Caco-2 (cell line): ENCODE measurements at regions of chr19 and their contacts with region 1.

Region 1: DNA sequence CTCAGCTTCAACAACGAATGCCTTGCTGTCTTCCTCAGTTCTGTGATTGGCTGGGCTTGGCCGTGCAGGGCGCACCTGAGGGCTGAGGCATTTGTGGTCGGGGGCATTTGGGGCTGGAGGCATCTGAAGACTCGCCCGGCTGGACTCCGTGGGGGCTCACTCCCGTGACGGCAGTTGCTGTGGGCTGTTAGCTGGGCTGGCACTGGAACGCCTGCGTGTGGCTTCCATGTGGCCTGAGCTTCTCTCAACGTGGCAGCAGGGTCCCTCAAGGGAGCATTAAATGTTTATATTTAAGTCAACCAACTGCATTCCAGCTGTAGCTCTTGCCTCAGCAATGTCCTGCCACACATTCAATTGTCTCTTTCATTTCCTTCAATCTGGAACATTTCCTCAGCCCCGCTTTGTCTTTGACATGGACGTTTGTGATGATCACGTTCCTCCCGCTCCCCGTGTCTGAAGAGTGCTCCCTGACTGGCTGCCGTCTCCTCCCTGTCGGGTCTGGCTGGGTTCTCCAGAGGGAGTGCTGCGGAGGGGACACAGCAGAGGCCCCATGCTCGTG is 21.0 kb downstream of the CCDC8 start:
- DNase-seq: no peak
- H3K4me3 ChIP-seq: no peak overlapping the region
- H3K4me3 Mint-ChIP-seq: no peak overlapping the region
- H3K27ac Mint-ChIP-seq: no peak overlapping the region
- H3K4me1 ChIP-seq: no peaks in the 10 kb centered on the region
- H3K4me1 Mint-ChIP-seq: no peaks in the 10 kb centered on the region
- H3K27me3 ChIP-seq: no peaks in the 10 kb centered on the region
- H3K27me3 Mint-ChIP-seq: no peaks in the 10 kb centered on the region
- CTCF ChIP-seq: no peak

Region 2: DNA sequence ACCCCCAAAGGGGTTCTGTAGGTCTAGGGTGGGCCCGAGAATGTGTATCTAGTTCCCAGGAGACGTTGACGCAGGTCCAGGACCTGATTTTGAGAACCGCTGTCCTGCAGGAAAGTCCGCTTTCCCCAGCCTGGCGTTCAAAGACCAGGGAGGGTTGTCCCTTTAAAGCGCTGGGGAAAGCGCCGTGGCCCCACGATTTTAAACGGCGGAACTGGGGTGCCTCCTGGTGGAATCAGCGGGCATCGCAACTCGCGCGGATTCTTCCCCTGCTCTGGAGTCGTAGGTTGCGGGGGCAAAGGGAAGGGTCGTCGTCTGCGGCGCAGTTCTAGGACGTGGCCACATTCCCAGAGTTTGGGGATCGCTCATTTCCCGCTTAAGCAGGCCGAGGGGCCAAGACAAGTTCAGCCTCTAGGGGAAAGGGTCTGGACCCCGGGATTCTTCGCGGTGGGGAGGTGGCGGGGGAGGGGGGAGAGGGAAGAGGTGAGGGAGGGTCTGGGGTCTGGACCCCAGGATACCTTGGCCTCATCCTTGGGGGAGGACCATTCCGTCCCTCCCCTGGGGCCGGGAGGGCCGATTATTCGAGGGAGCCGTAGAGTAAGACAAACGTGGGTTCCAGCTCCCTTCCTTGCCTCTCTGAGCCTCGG is 95.6 kb after region 1 on chr19:
- CTCF ChIA-PET with region 1: interaction called, 5 read pairs
- POLR2A ChIA-PET with region 1: no interaction called
- intact Hi-C with region 1: loop called (anchors 1 kb)
- DNase-seq: peak; percentile 71 to 86
- H3K4me3 ChIP-seq: peak overlapping the region; percentile 22
- H3K4me3 Mint-ChIP-seq: peak overlapping the region; percentile 43
- H3K27ac Mint-ChIP-seq: no peak overlapping the region
- H3K4me1 ChIP-seq: no peaks in the 10 kb centered on the region
- H3K4me1 Mint-ChIP-seq: no peaks in the 10 kb centered on the region
- H3K27me3 ChIP-seq: peaks cover 1% of the 10 kb centered on the region
- H3K27me3 Mint-ChIP-seq: peaks cover 13% of the 10 kb centered on the region
- CTCF ChIP-seq: peak; percentile 93 to 94

Region 3: DNA sequence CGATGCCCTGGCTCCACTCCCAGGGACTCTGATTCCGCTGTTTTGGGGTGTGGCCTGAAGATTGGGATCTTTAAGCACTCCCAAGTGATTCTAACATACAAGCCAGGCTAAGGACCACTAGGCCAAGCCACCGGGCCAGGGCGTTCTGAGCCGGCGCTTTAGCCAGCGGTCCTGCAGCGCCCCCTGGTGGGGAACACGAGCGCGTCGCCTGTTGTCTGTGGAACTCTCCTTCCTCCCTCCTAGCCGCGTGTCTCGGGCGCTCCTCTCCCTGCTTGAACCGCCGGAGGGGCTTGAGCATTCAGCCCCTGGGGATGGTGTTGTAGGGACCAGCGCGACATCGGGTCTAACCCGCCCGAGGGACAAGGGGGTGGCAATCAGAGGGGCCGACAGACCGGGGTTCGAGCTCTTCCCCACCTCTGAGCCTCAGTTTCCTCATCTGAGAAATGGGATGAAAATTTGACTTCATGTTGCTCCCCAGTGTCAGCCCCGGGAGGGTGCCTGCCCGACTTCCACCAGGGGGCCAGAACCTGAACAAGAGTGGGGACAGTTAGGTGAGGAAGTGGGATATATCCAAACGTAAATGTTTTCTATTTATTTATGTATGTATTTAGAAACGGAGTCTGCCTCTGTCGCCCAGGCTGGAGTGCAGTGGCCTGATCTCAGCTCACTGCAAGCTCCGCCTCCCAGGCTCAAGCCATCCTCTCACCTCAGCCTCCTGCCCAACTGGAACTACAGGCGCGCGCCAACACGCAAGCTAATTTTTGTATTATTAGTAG is 121.3 kb after region 1 on chr19:
- CTCF ChIA-PET with region 1: interaction called, 3 read pairs
- POLR2A ChIA-PET with region 1: no interaction called
- intact Hi-C with region 1: loop called (anchors 1 kb)
- DNase-seq: peak; percentile 67 to 84
- H3K4me3 ChIP-seq: no peak overlapping the region
- H3K4me3 Mint-ChIP-seq: no peak overlapping the region
- H3K27ac Mint-ChIP-seq: no peak overlapping the region
- H3K4me1 ChIP-seq: no peaks in the 10 kb centered on the region
- H3K4me1 Mint-ChIP-seq: no peaks in the 10 kb centered on the region
- H3K27me3 ChIP-seq: no peaks in the 10 kb centered on the region
- H3K27me3 Mint-ChIP-seq: no peaks in the 10 kb centered on the region
- CTCF ChIP-seq: peak; percentile 87 to 91